Right cardiac atrium (tissue), 5 donors: ENCODE measurements at regions of chr9 and their contacts with region 1.

Region 1: DNA sequence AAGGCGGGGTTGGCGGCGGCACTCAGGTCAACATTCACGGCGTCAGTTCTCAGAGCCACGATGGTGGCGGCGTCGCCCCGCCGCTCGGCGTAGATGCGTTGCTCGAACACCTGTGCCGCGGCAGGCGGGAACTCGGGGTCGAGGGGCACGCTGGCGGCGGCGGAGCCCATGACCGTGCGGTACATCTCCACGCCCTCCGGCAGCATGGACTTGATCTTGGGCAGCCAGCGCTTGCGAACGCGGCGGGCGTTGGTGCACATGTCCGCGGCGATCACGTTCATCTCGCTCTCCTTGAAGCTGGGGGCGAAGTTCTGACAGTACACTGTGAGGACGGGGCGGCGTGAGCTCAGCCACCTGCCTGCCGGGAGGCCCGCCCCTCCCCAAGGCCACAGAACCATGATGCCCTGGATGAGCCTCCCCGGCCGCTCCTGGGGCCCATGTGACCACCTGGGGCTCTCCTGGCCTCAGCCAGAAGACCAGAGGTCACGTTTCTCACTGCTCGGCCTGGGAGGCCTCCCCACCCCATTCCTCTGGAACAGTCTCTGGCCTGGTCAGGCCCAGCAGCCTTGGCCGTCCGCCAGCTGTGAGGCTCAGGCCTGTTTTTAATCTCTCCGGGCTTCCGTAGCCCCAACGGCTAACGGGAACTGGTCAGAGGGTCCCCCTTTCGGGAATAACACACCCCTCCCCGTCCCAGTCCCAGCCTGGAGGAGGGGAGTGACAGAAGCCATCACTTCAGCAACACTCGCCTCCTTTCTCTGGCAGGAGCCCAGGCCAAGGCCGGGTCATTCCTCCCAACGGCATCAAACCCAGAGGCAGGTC is 50.7 kb upstream of the UBAC1 start:
- DNase-seq: peak; percentile 94 to 97 (median 96)
- ATAC-seq: peak; percentile 82 to 84
- H3K4me3 ChIP-seq: no peak overlapping the region
- H3K27ac ChIP-seq: peak overlapping the region; percentile 43
- H3K4me1 ChIP-seq: peaks cover 5% of the 10 kb centered on the region
- H3K27me3 ChIP-seq: no peaks in the 10 kb centered on the region

Region 2: DNA sequence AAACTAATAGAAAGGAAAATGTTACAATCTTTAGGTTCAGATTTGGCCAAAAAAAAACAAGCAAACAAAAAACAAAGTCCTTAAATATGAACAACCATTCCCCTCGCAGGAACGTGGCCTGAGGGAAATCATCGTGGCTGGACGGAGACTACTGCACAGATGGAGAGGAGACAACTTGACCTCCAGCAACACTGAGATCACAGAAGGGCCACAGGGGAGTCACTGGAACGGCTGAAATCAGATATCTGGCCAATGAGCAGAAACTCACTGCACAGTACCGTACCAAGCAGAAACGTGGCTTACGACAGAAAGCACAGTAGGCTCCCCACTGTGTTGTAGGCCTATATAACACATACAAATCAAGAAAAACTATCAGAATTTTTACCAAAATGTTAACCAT is 132.3 kb before region 1 on chr9:
- intact Hi-C with region 1: no loop called
- DNase-seq: no peak
- ATAC-seq: peak; percentile 55 to 57
- H3K4me3 ChIP-seq: no peak overlapping the region
- H3K27ac ChIP-seq: no peak overlapping the region
- H3K4me1 ChIP-seq: no peaks in the 10 kb centered on the region
- H3K27me3 ChIP-seq: no peaks in the 10 kb centered on the region

Region 3: GRCh38 chr9:136089697-136090045 is 77.8 kb after region 1 on chr9:
- intact Hi-C with region 1: loop called in 1 of 4 experiments (anchors 10 kb)
- DNase-seq: no peak
- ATAC-seq: no peak
- H3K4me3 ChIP-seq: no peak overlapping the region
- H3K27ac ChIP-seq: no peak overlapping the region
- H3K4me1 ChIP-seq: peaks cover 13% of the 10 kb centered on the region
- H3K27me3 ChIP-seq: no peaks in the 10 kb centered on the region

Region 4: GRCh38 chr9:136151214-136151804 is 139.4 kb after region 1 on chr9:
- intact Hi-C with region 1: no loop called
- DNase-seq: peak; percentile 3 to 23 (median 14)
- ATAC-seq: no peak
- H3K4me3 ChIP-seq: no peak overlapping the region
- H3K27ac ChIP-seq: no peak overlapping the region
- H3K4me1 ChIP-seq: no peaks in the 10 kb centered on the region
- H3K27me3 ChIP-seq: no peaks in the 10 kb centered on the region